HCT116 (cell line): ENCODE measurements at regions of chr2 and their contacts with region 1.

Region 1: DNA sequence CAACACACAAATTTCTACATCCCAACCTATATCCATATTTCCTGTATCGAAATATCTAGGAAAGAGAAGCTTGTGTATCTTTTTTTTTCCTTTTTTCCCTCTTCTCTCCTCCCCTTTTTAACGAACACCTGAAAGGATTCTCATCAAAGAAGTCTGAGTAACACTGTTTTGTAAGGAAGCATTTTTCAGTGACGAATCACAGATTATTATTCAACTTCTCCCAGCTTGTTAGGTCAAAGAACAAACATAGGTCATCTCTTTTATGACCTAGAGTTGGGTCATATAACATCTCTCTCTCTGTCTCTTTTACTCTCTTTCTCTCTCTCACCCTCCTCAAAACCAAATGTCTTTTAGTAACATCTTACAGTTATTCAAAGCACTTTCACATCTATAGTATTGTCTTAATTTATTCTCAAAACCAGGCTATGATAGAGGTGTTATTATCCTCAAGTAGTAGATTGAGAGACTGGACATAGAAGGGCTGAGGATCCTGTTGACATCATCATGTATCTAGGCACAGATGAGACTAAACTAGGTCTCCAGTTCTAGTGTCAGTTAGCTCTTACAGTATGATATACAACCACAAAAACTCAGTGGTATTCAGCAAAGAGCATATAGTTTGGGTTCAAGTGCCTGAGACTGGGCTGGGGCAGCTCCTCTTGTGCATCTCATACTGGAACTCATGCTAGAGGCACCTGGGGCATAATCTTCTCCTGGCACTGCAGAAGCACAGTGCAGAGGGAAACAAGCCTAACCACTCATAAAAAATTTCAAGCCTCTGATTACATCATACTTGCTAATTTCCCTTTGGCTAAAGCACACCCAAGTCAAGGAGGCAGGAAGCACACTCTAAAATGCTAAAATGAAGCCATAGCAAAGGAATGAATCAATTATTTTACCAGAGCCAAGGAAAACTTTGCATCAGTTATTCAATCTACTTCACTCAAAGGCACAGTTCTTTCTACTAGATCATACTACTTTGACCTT is 80.0 kb upstream of the SPOPL start:
- DNase-seq: peak; percentile 64
- ATAC-seq: peak; percentile 81
- H3K4me3 ChIP-seq: peak overlapping the region in 1 of 2 experiments; percentile 1; a peak in 2 of 4 replicates
- H3K27ac ChIP-seq: peak overlapping the region; percentile 20; the same call in 1 of the 2 replicates
- H3K4me1 ChIP-seq: peaks cover 17 to 38% of the 10 kb centered on the region in 2 experiments
- H3K27me3 ChIP-seq: no peaks in the 10 kb centered on the region
- CTCF ChIP-seq: no peak
- POLR2A ChIP-seq: no peak
- RAD21 ChIP-seq: peak; percentile 6; the same call in 1 of the 2 replicates

Region 2: DNA sequence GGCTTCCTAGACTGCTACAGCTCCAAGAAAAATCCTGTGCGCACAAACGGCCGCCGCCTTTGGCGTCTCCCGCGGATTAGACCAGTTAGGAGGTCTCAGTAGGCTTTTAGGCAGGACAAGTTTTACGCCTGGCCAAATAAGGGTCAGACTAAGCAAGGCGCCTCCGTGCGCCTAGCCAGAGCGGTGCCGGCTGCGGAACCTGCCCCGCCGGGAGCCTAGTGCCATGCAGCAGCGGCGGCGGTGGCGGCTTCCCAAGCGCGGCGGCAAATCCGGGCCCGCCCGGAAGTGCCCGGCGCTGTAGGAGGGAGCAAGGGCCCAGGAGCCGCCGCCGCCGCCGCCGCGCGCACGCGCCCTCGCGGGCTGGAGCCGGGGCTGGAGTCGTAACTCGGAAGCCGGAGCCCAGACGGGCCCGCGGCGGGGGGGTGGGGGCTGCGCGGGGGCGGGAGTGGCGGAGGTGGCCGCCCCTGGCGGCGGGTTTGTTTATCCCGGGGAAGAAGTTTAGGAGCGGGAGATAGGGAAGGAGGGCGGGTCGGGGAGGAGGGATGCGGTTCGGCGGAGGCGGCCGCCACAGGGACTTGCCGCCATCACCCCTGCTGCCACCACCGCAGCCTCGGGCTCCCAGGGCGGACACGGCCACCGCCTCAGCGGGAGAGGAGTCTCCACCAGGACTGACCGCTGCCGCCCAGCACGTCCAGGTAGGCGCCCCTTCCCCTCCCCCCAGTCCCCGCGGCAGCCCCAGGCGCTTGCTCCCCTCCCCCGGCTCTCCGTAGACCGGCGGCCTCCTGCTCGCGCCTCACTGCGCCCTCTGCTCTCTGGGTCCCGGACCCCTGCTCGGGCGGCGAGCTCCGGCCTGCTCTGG is 80.0 kb after region 1 on chr2 and contains the start of gene SPOPL:
- CTCF ChIA-PET with region 1: no interaction called
- POLR2A ChIA-PET with region 1: no interaction called
- RAD21 ChIA-PET with region 1: no interaction called
- intact Hi-C with region 1: loop called (anchors 5 kb)
- DNase-seq: peak; percentile 77
- ATAC-seq: peak; percentile 93
- H3K4me3 ChIP-seq: peak within 1 kb of the TSS; percentile 72 to 83
- H3K27ac ChIP-seq: peak within 1 kb of the TSS; percentile 76
- H3K4me1 ChIP-seq: peaks cover 13 to 32% of the 10 kb centered on the region in 2 experiments; a peak in 3 of 4 replicates
- H3K27me3 ChIP-seq: no peaks in the 10 kb centered on the region
- CTCF ChIP-seq: no peak
- POLR2A ChIP-seq: peak; percentile 88
- RAD21 ChIP-seq: no peak
- total RNA-seq, gene SPOPL: 48.3 TPM

Region 3: DNA sequence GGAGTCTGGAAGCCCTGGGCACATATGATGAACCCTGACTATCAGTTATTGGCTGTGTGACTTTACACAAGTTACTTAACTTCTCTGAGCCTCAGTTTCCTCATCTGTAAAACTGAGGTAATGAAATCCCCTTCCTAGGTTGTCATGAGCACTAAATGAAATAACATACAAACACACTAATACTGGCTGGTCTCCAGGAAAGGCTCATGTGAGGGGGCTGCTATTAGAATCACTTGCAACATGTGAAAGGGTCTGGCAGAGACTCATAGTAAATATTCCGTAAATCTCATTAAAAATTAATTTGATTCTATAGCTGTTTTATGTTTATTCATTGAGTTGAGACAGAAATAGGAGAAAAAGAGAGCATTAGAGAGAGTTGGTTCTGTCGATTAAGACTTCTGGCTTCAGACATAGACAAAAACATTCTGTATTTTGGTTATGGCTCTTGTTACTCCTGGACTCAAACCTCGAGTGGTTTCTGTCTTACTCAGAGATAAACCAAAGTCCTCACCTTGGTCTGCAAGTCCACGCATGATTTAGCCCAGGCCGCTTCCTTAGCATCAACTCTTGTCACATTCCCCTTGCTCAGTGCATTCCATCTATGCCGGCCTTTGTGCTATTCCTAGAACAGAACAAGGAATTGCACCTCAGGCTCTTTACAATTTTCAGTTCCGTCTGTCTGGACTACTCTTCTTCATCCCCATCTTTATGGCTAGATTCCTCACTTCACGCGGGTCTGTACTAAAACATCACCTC is 219.5 kb after region 1 on chr2:
- CTCF ChIA-PET with region 1: no interaction called
- POLR2A ChIA-PET with region 1: no interaction called
- RAD21 ChIA-PET with region 1: no interaction called
- intact Hi-C with region 1: loop called (anchors 5 kb)
- DNase-seq: no peak
- ATAC-seq: no peak
- H3K4me3 ChIP-seq: no peak overlapping the region
- H3K27ac ChIP-seq: no peak overlapping the region
- H3K4me1 ChIP-seq: peaks cover 10 to 26% of the 10 kb centered on the region in 2 experiments; a peak in 3 of 4 replicates
- H3K27me3 ChIP-seq: no peaks in the 10 kb centered on the region
- CTCF ChIP-seq: no peak
- POLR2A ChIP-seq: no peak
- RAD21 ChIP-seq: no peak